Activated CD4-positive, alpha-beta T cell treated with anti-CD3 and anti-CD28 coated beads for 36 hours (primary cell): ENCODE measurements at regions of chr15 and their contacts with region 1.

Region 1: DNA sequence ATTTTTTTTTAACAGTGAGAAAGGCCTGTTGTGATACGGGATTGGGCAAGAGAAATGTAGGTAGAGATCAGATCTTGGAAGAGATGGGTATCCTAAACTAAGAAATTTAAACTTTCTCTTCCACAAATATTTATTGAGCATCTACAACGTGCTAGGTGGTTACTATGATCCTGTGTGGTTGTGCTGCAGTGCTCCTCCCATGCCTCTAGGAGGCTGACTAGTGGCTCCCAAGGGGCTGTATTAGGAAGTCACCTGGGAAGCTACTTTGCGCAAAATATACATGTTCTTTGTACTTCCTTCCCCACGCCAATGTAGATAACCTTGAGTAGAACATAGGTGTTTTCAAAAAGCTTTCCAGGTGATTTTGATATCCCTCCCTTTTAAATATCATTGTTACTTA is 27.2 kb downstream of the USP3 start:
- DNase-seq: no peak
- ATAC-seq: no peak
- H3K4me3 Mint-ChIP-seq: no peak overlapping the region
- H3K27ac Mint-ChIP-seq: peak overlapping the region; percentile 33
- H3K4me1 Mint-ChIP-seq: peaks cover 91% of the 10 kb centered on the region
- H3K27me3 Mint-ChIP-seq: no peaks in the 10 kb centered on the region

Region 2: GRCh38 chr15:63514531-63514943 is 17.0 kb before region 1 on chr15:
- CTCF ChIA-PET with region 1: interaction called, 16 read pairs
- POLR2A ChIA-PET with region 1: no interaction called
- intact Hi-C with region 1: loop called (anchors 2 kb)
- DNase-seq: no peak
- ATAC-seq: no peak
- H3K4me3 Mint-ChIP-seq: peak overlapping the region; percentile 42
- H3K27ac Mint-ChIP-seq: peak overlapping the region; percentile 64
- H3K4me1 Mint-ChIP-seq: peaks cover 91% of the 10 kb centered on the region
- H3K27me3 Mint-ChIP-seq: no peaks in the 10 kb centered on the region

Region 3: DNA sequence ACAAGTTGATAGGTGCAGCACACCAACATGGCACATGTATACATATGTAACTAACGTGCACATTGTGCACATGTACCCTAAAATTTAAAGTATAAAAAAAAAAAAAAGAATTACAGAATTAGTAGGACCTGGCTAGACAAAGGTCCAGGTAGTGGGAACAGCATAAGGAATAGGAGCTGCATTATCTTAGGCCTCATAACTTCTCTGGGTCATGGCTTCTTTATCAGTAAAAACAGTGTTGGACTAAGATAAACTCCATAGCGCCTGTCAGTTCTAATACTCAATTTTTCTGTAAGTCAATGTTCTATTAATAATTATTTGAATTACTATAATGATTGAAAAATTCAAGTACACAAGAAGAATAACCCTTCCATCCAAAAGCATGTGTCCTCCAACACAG is 203.9 kb after region 1 on chr15:
- CTCF ChIA-PET with region 1: no interaction called
- POLR2A ChIA-PET with region 1: no interaction called
- intact Hi-C with region 1: no loop called
- DNase-seq: no peak
- ATAC-seq: no peak
- H3K4me3 Mint-ChIP-seq: no peak overlapping the region
- H3K27ac Mint-ChIP-seq: no peak overlapping the region
- H3K4me1 Mint-ChIP-seq: peaks cover 2% of the 10 kb centered on the region
- H3K27me3 Mint-ChIP-seq: no peaks in the 10 kb centered on the region